Brain microvascular endothelial cell (primary cell): ENCODE measurements at regions of chr17 and their contacts with region 1.

Region 1: DNA sequence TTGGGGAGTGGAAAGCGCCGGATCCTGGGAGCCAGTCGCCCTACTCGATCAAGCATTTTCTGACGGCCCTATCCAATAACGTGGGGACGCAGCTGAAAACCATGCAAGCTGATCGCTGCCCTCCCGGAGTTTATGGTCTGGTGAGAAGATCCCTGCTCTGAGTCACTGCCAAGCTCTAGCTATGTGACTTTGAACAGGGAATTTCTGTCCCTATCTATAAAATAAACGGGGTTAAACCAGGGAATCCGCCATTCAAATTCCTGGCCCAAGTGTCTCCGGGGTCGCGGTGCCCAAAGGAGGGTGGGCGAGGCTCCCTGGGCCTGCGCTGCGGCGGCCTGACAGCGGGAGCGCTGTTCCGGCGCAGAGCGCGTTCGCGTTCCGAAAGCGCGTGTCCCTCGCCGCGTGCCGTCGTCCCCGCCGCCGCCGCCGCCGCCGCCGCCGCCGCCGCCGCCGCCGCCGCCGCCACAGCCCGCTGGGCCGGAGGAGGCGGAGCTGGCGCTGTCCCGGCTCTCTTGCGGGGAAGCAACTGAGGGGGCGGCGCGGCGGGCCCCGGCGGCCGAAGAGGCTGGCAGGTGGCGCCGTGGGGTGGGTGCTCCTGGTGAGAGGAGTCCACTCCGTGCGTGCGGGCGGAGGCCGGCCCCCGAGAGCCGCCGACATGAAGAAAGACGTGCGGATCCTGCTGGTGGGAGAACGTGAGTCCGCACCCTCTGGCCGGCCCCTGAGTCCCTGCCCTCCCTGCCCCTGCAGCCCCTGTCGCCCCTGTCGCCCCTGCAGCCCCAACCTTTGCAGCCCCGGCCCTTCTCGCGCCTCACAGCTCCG is at the start of gene RHOT1:
- DNase-seq: peak; percentile 84
- H3K4me3 ChIP-seq: peak within 1 kb of the TSS; percentile 94
- H3K27ac ChIP-seq: peak within 1 kb of the TSS; percentile 95
- H3K27me3 ChIP-seq: no peaks in the 10 kb centered on the region
- CTCF ChIP-seq: peak; percentile 61

Region 2: GRCh38 chr17:32006957-32007462 is 135.2 kb before region 1 on chr17 and contains the start of gene LRRC37B:
- in situ Hi-C with region 1: loop called (anchors 25 kb)
- DNase-seq: peak; percentile 63
- H3K4me3 ChIP-seq: peak within 1 kb of the TSS; percentile 94
- H3K27ac ChIP-seq: peak within 1 kb of the TSS; percentile 70
- H3K27me3 ChIP-seq: no peaks in the 10 kb centered on the region
- CTCF ChIP-seq: peak; percentile 61

Region 3: GRCh38 chr17:32206861-32207260 is 64.6 kb after region 1 on chr17:
- in situ Hi-C with region 1: no loop called
- DNase-seq: peak; percentile 7
- H3K4me3 ChIP-seq: no peak overlapping the region
- H3K27ac ChIP-seq: no peak overlapping the region
- H3K27me3 ChIP-seq: no peaks in the 10 kb centered on the region
- CTCF ChIP-seq: no peak